ENCODE measurements at regions of chr3 and their contacts with region 1.

Region 1: GRCh38 chr3:18717598-18717997 is 292.5 kb upstream of the SATB1 start:
- DNase-seq: peak; percentile 64
- H3K4me3 Mint-ChIP-seq: peak overlapping the region; percentile 56
- H3K27ac Mint-ChIP-seq: peak overlapping the region; percentile 95
- H3K4me1 Mint-ChIP-seq: peaks cover 56% of the 10 kb centered on the region
- H3K27me3 Mint-ChIP-seq: no peaks in the 10 kb centered on the region

Region 2: GRCh38 chr3:18649666-18650363 is 67.8 kb before region 1 on chr3:
- intact Hi-C with region 1: loop called (anchors 1 kb)
- DNase-seq: peak; percentile 89
- H3K4me3 Mint-ChIP-seq: peak overlapping the region; percentile 61
- H3K27ac Mint-ChIP-seq: peak overlapping the region; percentile 93
- H3K4me1 Mint-ChIP-seq: peaks cover 73% of the 10 kb centered on the region
- H3K27me3 Mint-ChIP-seq: no peaks in the 10 kb centered on the region

Region 3: GRCh38 chr3:18758047-18758704 is 40.6 kb after region 1 on chr3:
- intact Hi-C with region 1: loop called (anchors 1 kb)
- DNase-seq: peak; percentile 88
- H3K4me3 Mint-ChIP-seq: peak overlapping the region; percentile 27
- H3K27ac Mint-ChIP-seq: peak overlapping the region; percentile 74
- H3K4me1 Mint-ChIP-seq: peaks cover 38% of the 10 kb centered on the region
- H3K27me3 Mint-ChIP-seq: no peaks in the 10 kb centered on the region

Measured in activated CD4-positive, alpha-beta T cell treated with anti-CD3 and anti-CD28 coated beads, Interleukin-2, amount 10 ng/mL, durations not matched to agents 24 days and 14 days (primary cell).